GM13977 (cell line): ENCODE measurements at regions of chr7 and their contacts with region 1.

Region 1: GRCh38 chr7:70154521-70155180 is 556.4 kb downstream of the AUTS2 start:
- DNase-seq: no peak
- CTCF ChIP-seq: no peak

Region 2: GRCh38 chr7:69630292-69630691 is 524.4 kb before region 1 on chr7:
- in situ Hi-C with region 1: loop called (anchors 25 kb)
- DNase-seq: peak; percentile 13
- CTCF ChIP-seq: no peak